Cardiac septum (tissue), 1 donor: ENCODE measurements at regions of chr4 and their contacts with region 1.

Region 1: GRCh38 chr4:52545099-52546069 is 113.7 kb downstream of the USP46 start:
- DNase-seq: peak; percentile 84

Region 2: DNA sequence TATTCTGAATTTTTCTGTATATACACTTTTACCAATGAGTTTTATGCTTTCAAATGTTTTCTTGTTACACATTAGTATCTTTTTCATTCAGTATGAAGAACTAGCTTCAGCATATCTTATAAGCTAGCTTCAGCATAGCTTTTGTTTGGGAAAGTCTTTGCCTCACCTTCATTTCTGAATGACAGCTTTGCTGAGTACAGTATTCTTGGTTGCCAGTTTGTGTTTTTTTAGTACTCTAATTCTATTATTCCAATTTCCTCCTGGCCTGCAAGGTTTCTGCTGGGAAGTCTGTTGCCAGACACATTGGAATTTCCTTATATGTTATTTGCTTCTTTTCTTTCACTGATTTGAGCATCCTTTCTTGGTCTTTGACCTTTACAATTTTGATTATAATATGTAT is 215.5 kb before region 1 on chr4:
- intact Hi-C with region 1: no loop called
- DNase-seq: no peak

Region 3: GRCh38 chr4:52376132-52376704 is 169.2 kb before region 1 on chr4:
- intact Hi-C with region 1: loop called (anchors 5 kb)
- DNase-seq: no peak

Region 4: DNA sequence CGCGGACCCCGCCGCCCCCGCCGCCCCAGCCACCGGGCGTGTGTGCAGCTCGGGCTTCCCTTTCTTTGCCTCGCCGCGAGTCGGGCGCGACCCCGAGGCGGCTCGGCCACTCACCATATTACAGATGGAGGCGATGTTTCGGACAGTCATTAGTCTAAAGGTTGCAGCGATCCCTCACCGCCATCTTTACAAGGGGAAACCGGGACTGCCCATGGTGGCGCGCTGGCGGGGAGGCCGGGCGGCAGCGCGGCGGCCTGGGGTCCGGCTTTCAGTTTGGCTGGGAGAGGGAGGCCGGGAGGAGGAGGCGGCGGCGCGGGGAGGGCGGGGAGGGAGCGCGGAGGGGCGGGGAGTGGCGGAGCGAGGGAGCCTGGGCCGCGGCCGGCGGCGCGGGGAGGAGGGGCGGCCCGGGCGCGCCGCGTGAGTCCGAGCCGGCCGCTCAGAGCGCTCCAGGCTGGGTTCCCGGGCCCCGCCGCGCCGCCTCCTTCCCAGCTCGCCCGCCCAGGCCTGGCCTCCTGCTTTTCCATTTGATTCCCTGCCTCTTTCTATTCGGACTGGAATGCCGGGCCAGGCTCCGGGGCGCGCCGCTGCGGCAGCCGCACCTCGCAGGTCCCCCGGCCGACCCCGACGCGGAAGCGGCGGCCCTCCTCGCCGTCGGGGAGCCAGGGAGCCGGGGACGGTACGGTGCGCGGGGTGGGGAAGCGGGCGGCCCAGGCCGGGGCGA is 113.8 kb after region 1 on chr4 and contains the start of gene USP46:
- intact Hi-C with region 1: loop called (anchors 2 kb)
- DNase-seq: peak; percentile 90
- total RNA-seq, gene USP46: 111 TPM

Region 5: GRCh38 chr4:52813546-52813945 is 268.2 kb after region 1 on chr4:
- intact Hi-C with region 1: no loop called
- DNase-seq: no peak

Region 6: GRCh38 chr4:52869196-52869595 is 323.8 kb after region 1 on chr4:
- intact Hi-C with region 1: loop called (anchors 2 kb)
- DNase-seq: peak; percentile 83